CD8-positive, alpha-beta T cell (primary cell): ENCODE measurements at regions of chr2 and their contacts with region 1.

Region 1: GRCh38 chr2:35468245-35468644 is 887.3 kb upstream of the CRIM1 start:
- DNase-seq: no peak
- ATAC-seq: no peak
- H3K4me3 ChIP-seq: no peak overlapping the region
- H3K4me3 Mint-ChIP-seq: no peak overlapping the region
- H3K27ac ChIP-seq: no peak overlapping the region
- H3K27ac Mint-ChIP-seq: no peak overlapping the region
- H3K4me1 ChIP-seq: no peaks in the 10 kb centered on the region
- H3K4me1 Mint-ChIP-seq: no peaks in the 10 kb centered on the region
- H3K27me3 ChIP-seq: no peaks in the 10 kb centered on the region
- H3K27me3 Mint-ChIP-seq: no peaks in the 10 kb centered on the region
- CTCF ChIP-seq: no peak

Region 2: DNA sequence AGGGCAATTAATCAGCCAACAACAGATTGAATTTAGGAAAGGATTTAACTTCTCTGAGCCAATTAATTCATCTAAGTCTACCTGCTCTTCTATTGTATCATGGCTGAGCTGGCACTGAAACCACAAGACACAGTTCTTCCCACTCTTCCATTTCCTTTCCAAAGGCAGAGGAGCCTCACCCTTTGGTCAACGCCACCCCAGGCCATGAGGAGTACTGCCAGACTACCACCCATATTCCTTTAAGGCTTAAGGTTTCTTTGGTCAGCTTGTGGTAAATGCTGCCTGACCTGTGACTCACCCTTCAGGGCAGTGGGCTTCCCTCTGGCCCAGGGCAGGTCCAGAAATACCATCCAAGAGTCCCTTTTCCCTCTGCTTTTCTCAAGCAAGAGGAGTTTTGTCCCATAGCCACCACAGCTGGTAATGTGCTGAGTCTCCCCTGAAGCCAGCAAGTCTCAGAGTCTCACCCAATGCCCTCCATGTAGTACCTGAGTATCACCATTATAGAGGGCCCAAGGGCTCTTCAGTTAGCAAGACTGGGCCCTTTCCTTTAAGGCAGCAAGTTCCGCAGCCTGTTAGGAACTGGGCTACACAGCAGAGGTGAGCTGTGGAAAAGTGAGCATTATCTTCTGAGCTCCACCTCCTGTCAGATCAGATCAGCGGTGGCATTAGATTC is 13.1 kb before region 1 on chr2:
- CTCF ChIA-PET with region 1: no interaction called
- POLR2A ChIA-PET with region 1: no interaction called
- intact Hi-C with region 1: loop called in 1 of 2 experiments (anchors 1 kb)
- DNase-seq: no peak
- ATAC-seq: no peak
- H3K4me3 ChIP-seq: no peak overlapping the region
- H3K4me3 Mint-ChIP-seq: no peak overlapping the region
- H3K27ac ChIP-seq: no peak overlapping the region
- H3K27ac Mint-ChIP-seq: no peak overlapping the region
- H3K4me1 ChIP-seq: no peaks in the 10 kb centered on the region
- H3K4me1 Mint-ChIP-seq: no peaks in the 10 kb centered on the region
- H3K27me3 ChIP-seq: no peaks in the 10 kb centered on the region
- H3K27me3 Mint-ChIP-seq: no peaks in the 10 kb centered on the region
- CTCF ChIP-seq: no peak